H1 (cell line): ENCODE measurements at regions of chr11 and their contacts with region 1.

Region 1: DNA sequence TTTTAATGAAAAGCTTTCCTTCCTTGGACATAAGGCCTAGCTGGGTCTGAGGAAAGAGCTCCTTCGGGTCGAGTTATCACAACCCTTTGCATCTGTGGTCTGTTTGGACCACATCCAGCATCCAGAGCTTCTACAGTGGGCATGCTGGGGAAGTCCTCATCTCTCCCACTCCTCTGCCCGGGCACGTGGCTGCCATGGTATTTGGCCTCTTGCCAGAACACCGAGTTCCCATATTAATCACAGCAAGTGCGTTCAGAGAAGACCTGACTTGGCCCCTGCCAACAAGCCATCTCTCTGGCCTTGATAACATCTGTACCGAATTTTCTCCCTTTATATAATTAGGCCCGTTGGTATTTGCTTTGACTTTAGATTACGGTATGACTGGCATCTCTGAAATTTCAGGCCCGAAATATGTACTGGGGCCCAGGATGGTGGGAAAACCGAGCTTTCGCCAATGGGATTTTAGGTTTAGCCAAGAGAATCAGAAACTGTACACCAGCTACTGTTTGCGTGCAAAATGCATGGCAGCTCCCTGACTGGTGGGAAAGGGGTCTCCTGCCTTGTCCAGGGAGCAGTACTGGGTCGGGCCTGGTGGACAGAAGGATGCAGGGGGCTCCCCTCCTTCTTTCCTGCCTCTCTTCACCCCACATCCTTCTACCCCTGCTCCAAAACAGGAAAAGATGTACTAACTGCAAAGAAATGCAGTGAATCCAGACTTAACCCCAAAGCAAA is 90.1 kb downstream of the MICAL2 start:
- DNase-seq: no peak
- H3K4me3 ChIP-seq: no peak overlapping the region
- H3K27ac ChIP-seq: no peak overlapping the region
- H3K4me1 ChIP-seq: peaks cover 0 to 3% (median under 1%) of the 10 kb centered on the region in 4 experiments; a peak in 3 of 7 replicates
- H3K27me3 ChIP-seq: no peaks in the 10 kb centered on the region; a peak in 1 of 7 replicates
- CTCF ChIP-seq: no peak
- EP300 ChIP-seq: no peak
- POLR2A ChIP-seq: no peak
- RAD21 ChIP-seq: no peak

Region 2: GRCh38 chr11:12066799-12067508 is 133.5 kb before region 1 on chr11:
- CTCF ChIA-PET with region 1: no interaction called
- POLR2A ChIA-PET with region 1: no interaction called
- DNase-seq: no peak
- H3K4me3 ChIP-seq: no peak overlapping the region; a peak in 1 of 8 replicates
- H3K27ac ChIP-seq: no peak overlapping the region
- H3K4me1 ChIP-seq: peaks cover 2 to 9% (median 5%) of the 10 kb centered on the region in 4 experiments; a peak in 4 of 7 replicates
- H3K27me3 ChIP-seq: peaks cover 0 to 2% (median under 1%) of the 10 kb centered on the region in 4 experiments; a peak in 1 of 7 replicates
- CTCF ChIP-seq: no peak
- EP300 ChIP-seq: no peak
- POLR2A ChIP-seq: no peak
- RAD21 ChIP-seq: no peak

Region 3: DNA sequence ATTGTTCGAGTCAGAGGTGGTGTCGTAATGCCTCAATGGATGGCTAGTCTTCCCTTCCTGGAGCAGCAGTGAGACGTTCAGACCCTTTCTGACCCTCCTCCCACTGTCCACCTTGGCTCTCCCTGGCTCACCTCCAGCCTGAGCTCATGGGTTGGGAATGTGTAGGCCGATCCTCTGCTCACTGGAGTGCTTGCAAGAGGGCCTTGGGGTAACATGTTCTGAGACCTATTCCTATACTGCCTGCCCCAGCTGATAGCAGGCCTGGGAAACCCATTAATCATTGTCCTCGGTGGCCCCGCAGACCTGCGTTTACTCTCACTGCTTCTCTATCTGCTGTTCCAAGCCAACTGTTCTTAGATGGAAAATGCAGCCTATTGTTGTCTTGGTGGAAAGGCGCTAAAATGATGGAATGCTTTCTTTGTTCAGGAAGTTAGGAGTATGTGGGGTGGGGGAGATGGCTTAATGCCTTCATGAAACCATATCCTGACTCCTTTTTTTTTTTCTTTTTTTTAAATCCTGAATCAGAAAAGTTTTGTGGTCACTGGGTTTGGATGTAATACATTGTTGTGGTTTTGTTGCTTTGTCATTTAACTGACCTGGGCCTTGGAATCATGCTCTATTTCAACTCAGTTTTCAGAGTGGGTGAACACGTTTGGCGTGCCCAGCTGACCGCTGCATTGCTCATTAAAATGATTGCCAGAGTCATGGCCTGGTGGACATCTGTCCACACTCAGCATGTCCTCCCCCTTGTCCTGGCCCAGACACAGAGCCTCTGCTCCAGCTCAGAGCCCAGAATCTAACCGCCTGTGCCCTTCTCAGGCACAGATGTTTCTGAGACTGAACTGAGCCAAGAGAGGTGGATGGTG is 17.5 kb before region 1 on chr11:
- CTCF ChIA-PET with region 1: interaction called, 13 read pairs
- POLR2A ChIA-PET with region 1: no interaction called
- DNase-seq: no peak
- H3K4me3 ChIP-seq: no peak overlapping the region
- H3K27ac ChIP-seq: no peak overlapping the region
- H3K4me1 ChIP-seq: peaks cover 0 to 4% (median 0%) of the 10 kb centered on the region in 4 experiments; a peak in 1 of 7 replicates
- H3K27me3 ChIP-seq: no peaks in the 10 kb centered on the region
- CTCF ChIP-seq: no peak
- EP300 ChIP-seq: no peak
- POLR2A ChIP-seq: no peak
- RAD21 ChIP-seq: no peak

Region 4: DNA sequence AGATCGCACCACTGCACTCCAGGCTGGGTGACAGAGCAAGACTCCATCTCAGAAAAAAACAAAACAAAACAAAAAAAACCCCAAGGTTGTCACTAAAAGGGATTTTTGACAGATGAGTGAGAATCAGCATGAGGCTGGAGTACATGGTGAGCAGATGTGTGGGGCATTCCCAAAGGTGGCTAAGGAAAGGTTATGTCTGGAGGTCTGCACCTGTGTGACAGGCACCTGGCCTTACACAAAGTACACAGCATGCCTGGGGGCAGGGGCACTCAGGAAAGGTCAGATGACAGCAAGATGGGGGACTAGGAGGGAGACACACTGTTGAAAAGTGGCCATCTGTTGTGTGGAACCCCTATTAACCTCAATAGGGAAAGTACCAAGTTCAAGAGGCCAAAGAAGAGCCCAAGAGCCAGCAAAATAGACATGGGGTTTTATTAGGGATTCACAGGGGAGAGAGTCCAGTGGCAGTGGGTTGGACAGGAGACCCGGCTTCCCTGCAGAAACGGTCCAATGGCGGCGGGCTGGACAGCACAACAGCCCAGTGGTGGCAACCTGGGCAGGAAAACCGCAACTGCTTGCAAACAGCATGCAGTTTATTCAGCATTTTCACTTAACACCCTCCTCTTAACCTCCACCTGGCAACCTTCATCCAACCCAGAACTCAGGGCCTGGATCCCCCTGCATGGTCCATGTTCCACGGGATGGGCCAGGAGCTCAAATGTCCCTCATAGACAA is 11.1 kb after region 1 on chr11:
- CTCF ChIA-PET with region 1: interaction called, 10 read pairs
- POLR2A ChIA-PET with region 1: no interaction called
- DNase-seq: no peak
- H3K4me3 ChIP-seq: no peak overlapping the region
- H3K27ac ChIP-seq: no peak overlapping the region
- H3K4me1 ChIP-seq: peaks cover 0 to 5% (median 0%) of the 10 kb centered on the region in 4 experiments; a peak in 2 of 7 replicates
- H3K27me3 ChIP-seq: no peaks in the 10 kb centered on the region
- CTCF ChIP-seq: no peak
- EP300 ChIP-seq: no peak
- POLR2A ChIP-seq: no peak
- RAD21 ChIP-seq: no peak